ENCODE measurements at regions of chr10 and their contacts with region 1.

Region 1: DNA sequence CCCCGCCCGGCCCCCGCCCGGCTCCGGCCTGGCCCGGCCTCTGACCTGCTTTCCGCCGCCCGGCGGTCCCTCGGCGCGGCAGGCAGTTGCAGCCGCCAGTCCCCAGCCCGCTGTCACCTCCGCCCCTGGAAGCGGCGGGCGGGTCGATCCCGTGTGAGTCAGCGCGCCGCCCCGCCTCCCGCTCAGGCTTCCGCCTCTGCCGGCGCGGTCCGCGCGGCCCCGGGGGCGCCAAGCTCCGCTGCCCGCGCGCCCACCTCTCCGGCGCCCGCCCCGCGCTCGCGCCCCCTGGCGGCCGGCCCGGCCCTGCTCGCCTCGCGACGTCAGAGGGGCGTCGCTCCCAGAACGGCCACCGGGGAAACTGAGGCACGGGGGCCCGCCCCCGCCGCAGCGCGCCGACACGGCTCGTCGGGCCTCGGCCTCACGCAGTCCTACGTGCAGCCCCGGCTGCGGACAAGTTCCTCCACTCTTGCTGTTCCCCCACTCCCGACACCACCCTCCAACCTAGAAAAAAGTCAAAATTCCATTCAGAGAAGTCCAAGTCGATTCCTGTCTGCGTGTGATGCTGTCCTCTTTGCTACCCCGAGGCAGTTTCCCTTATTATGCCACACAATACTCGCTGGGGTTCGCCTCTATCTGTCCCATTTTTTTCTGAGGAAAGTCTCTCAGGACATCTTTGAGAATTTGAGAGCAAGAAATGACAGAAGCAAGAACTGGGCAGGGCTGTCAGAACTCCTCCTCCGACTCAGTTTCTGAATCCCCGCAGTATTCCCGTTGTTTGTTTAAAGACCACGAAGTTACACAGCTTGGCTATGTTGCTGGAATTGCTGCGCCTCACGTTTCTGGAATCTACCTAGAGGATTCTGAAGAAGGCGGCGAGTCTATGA is at the start of gene DNMBP:
- DNase-seq: no peak
- H3K4me3 ChIP-seq: peak within 1 kb of the TSS; percentile 85
- CTCF ChIP-seq: peak; percentile 43

Region 2: GRCh38 chr10:99945263-99945662 is 64.8 kb before region 1 on chr10:
- CTCF ChIA-PET with region 1: interaction called, 12 read pairs
- POLR2A ChIA-PET with region 1: no interaction called
- DNase-seq: peak; percentile 54
- H3K4me3 ChIP-seq: no peak overlapping the region
- CTCF ChIP-seq: no peak

Region 3: GRCh38 chr10:99976886-99977665 is 33.0 kb before region 1 on chr10:
- CTCF ChIA-PET with region 1: interaction called, 72 read pairs
- POLR2A ChIA-PET with region 1: interaction called, 8 read pairs
- DNase-seq: peak; percentile 92
- H3K4me3 ChIP-seq: peak overlapping the region; percentile 25
- CTCF ChIP-seq: no peak

Region 4: DNA sequence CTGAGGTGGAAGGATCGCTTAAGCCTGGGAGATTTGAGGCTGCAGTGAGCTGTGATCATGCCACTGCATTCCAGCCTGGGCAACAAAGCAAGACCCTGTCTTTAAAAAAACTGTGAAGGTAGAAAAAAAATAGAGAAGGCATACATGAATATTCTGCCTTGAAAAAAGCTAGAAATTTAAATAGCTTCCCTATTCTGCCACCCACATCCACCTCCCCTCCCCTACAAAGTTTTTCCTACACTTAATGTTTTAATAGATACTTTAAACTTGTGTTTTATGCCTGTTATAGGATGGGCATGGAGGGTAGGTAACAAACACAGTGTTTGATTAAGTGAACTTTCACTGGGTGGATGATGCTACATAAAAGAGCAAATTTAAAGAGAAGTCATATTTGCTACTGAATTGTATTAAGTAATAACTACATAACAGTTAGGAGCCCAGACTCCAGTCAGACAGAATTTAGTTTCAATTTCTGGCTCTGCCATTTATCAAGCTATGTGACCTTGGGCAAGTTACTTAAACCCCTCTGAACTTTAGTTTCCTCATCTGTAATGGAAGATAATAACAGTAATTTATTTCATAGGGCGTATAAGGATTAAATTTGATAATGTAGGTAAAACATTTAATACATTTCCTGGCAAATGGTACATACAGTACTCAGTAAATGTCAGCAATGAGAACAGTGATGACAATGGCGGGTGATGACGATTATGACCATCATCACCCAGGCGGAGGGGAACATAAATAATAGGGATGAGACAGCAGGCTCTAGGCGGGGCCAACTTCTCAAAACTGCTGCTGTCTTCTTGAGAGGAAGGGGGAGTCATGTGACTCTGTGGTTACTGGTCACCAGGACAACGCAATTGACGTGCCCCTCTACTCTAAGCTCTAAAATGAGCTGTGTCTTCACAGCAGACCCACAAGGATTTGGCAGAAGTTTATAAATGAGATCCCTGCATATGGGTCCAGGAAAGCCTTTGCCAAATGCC is 16.0 kb before region 1 on chr10:
- CTCF ChIA-PET with region 1: interaction called, 42 read pairs
- POLR2A ChIA-PET with region 1: interaction called, 3 read pairs
- DNase-seq: peak; percentile 54
- H3K4me3 ChIP-seq: no peak overlapping the region
- CTCF ChIP-seq: no peak

Region 5: GRCh38 chr10:100020142-100020885 is 10.3 kb after region 1 on chr10:
- CTCF ChIA-PET with region 1: interaction called, 74 read pairs
- POLR2A ChIA-PET with region 1: no interaction called
- DNase-seq: no peak
- H3K4me3 ChIP-seq: no peak overlapping the region
- CTCF ChIP-seq: no peak

Region 6: GRCh38 chr10:100209303-100209702 is 199.3 kb after region 1 on chr10:
- CTCF ChIA-PET with region 1: no interaction called
- POLR2A ChIA-PET with region 1: no interaction called
- DNase-seq: no peak
- H3K4me3 ChIP-seq: no peak overlapping the region
- CTCF ChIP-seq: no peak